Activated T-helper 2 cell treated with anti-CD3 and anti-CD28 coated beads, Interferon-gamma antibody, Interleukin-2, Interleukin-4, amounts not matched to agents 10 μg/mL and 5 μg/mL and 100 μg/mL, durations not matched to agents 14 hours and 24 hours and 36 hours (primary cell): ENCODE measurements at regions of chr5 and their contacts with region 1.

Region 1: DNA sequence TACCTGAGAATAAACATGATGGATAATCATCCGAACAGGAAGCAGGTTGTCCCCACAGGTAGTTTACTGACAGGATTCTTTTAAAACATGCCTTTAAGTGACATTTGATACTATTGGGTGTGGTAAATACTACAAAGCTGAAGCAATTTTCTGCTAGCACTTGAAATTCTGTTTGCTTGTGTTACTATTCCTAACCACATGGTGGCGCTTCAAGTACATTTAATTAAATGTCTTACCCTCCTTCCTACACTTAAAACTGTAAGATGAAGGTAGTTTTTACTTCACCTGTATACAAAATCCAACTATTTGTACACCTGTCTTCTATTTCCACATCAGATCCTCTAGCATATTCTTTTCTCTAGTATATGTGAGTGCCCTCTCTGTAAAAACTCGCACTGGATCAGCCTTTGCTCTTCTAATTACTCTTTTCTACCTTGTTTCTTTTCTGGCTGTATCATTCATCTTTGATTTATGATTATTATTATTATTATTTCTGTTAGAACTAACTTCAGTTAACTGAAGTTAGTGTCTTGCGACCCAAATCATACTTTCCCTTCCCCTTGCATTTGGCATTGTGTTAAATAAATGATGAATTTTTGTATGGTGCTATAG is 18.4 kb downstream of the SLC25A46 start:
- DNase-seq: no peak
- H3K4me3 Mint-ChIP-seq: no peak overlapping the region
- H3K27ac Mint-ChIP-seq: no peak overlapping the region
- H3K4me1 Mint-ChIP-seq: peaks cover 28% of the 10 kb centered on the region
- H3K27me3 Mint-ChIP-seq: no peaks in the 10 kb centered on the region

Region 2: DNA sequence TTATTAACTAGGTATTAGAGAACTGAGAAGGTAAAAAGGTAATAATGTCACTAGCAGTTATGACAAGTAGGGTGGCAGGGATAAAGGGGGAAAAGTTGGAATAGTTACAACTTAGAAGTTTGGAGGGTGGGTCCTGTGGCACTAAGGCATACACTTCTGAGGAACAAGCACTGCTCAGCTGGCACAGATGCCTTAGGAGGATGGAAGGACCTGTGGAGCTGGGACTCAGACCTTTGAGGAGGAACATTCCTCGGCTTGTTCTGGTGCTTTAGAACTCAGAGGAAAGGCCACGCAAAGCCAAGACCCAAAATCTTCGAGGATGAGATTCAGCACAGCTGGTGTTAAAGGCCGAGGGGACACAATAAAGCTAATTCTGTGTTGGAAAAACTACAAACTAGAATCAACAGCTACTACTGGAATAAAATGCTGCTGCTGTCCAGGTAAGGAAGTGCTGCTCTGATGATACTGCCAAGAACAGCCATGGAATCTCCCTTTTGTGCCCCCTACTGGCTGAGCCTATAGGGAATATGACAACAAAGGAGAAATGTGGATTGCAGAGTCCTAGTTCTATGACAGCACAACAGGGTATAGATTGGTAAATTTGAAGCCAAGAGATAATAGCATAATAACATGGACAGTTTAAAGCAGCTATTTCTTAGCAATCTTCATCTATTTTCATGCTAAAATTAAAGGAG is 108.3 kb after region 1 on chr5:
- intact Hi-C with region 1: loop called (anchors 1 kb)
- DNase-seq: no peak
- H3K4me3 Mint-ChIP-seq: no peak overlapping the region
- H3K27ac Mint-ChIP-seq: no peak overlapping the region
- H3K4me1 Mint-ChIP-seq: no peaks in the 10 kb centered on the region
- H3K27me3 Mint-ChIP-seq: peaks cover 10% of the 10 kb centered on the region